ENCODE measurements at regions of chr16 and their contacts with region 1.

Region 1: DNA sequence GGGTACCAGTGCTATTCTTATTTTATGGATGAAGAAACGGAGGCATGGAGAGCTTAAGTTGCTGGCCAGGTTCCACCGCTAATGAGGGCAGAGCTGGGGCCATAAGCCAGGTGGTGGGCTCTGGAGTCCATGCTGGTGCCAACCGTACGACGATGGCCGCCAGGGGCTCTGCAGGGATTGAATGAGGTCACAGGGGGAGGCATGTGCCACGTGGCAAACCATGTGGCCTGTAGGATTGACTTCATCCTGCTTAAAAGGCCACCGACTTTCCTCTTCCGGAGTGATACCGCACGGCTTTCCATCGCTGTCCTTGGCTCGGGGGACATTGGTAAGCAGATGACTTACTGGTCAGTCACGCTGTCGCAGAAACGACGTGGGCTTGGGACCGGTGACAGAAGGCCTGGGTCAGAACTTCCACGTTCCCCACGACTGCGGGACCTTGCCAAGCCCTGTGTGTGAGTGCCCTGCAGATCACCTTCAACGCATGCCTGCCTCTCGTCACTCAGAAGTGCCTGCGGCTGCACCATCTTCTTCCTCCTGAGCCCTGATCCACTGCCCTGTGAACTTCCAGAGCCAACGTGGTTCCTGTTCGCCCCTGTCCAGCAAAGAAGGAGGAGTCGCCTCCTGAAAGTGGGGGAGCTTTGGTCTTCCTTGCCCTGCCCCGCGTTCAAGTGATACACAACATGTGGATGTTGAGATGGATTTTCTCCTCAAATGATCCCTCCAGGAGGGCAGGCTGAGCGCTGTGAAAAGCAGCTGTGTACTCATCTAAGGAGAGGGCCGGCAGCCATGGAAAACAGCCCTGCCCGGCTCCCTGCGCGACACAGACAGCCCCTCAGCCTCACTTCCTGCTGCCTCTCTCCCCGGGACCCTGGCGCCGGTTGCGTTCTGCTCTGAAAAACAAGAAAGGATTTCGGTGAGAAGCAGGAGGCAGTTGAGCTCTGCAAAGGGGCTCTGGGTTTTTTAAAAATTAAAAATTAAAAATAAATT is 176.7 kb downstream of the C16orf95 start:
- DNase-seq: no peak
- H3K4me3 ChIP-seq: no peak overlapping the region
- H3K27ac ChIP-seq: no peak overlapping the region
- H3K4me1 ChIP-seq: no peaks in the 10 kb centered on the region
- H3K27me3 ChIP-seq: peaks cover 0 to 2% of the 10 kb centered on the region in 2 experiments
- CTCF ChIP-seq: no peak
- POLR2A ChIP-seq: no peak

Region 2: GRCh38 chr16:87127061-87127739 is 13.3 kb before region 1 on chr16:
- CTCF ChIA-PET with region 1: interaction called, 10 read pairs
- POLR2A ChIA-PET with region 1: interaction called, 4 read pairs
- dilution Hi-C with region 1: no loop called
- intact Hi-C with region 1: no loop called
- DNase-seq: peak; percentile 82
- H3K4me3 ChIP-seq: no peak overlapping the region
- H3K27ac ChIP-seq: no peak overlapping the region
- H3K4me1 ChIP-seq: peaks cover 2% of the 10 kb centered on the region
- H3K27me3 ChIP-seq: peaks cover 1% of the 10 kb centered on the region in 2 experiments
- CTCF ChIP-seq: no peak
- POLR2A ChIP-seq: no peak